ENCODE measurements at regions of chr10 and their contacts with region 1.

Region 1: GRCh38 chr10:73886085-73886529 is 11.8 kb upstream of the CAMK2G start:
- DNase-seq: peak; percentile 83
- H3K4me3 Mint-ChIP-seq: no peak overlapping the region
- H3K27ac Mint-ChIP-seq: peak overlapping the region; percentile 50
- H3K4me1 Mint-ChIP-seq: peaks cover 42% of the 10 kb centered on the region
- H3K27me3 Mint-ChIP-seq: no peaks in the 10 kb centered on the region
- CTCF ChIP-seq: peak; percentile 88

Region 2: DNA sequence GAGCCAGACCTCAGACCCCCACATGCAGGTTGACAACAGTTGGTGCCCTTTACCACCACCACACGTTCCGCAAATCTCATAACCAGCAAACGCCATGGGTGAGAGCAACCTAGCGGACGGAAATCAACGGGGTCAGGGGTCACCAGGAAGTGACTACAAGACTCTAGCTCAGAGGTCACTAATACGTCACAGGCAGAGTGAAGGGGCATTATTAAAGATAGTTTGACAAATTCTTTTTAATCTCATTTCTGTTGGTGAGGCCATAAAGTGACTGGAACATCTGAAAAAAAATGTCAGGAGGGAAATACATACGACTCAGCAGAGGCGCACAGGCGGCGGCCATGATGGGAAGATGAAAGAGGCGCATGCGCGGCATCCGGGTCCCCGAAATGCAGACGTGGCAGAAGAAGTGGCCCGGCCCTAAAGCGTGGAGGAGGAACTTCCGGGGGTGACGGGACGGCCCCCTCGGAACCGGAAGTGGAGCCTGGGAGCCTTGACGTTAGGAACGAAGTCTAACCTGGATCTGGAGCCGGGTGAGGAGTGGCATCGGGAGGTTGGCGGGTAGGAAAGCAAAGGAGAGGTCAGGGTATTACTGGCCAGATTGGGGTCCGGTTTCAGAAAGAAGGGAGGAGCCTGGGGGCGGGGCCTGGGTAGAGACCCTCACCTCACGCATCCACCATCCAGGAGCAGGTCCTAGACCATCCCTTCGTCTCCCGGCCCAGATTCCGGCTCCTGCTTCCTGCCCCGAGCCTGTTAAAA is 142.0 kb before region 1 on chr10 and contains the start of gene SEC24C:
- CTCF ChIA-PET with region 1: no interaction called
- POLR2A ChIA-PET with region 1: no interaction called
- intact Hi-C with region 1: no loop called
- DNase-seq: peak; percentile 97
- H3K4me3 Mint-ChIP-seq: peak within 1 kb of the TSS; percentile 98
- H3K27ac Mint-ChIP-seq: peak within 1 kb of the TSS; percentile 100
- H3K4me1 Mint-ChIP-seq: peaks cover 14% of the 10 kb centered on the region
- H3K27me3 Mint-ChIP-seq: no peaks in the 10 kb centered on the region
- CTCF ChIP-seq: no peak
- total RNA-seq, gene SEC24C: 78.0 and 97.9 TPM in 2 replicates

Region 3: DNA sequence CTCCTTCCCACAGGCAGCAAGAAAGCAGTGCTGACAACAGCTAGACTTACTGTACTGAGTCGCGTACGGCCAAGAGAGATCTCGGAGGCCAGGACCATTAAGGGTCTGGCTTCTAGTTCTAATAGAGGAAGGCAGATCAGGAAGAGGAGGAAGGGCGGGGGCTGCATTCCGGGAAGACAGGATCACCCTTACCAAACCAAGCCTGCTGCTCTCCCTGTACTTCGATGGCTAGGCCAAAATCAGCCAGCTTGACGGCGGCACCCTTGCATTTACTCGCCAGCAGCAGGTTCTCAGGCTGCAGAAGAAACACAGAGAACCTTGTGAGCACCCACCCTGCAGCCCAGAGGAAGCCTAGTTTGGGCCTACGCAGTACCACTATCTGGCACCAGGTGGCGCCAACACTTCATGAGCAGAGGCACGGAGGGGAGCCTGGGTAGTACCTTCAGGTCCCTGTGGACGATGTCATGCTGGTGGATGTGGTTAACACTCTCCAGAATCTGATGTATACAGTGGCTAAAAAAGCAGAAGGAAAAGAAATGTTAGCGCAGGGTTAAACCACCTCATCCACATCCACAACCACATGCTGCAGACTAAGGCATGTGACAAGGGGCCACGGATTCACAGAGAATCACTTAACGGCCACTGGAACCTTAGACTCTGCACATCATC is 37.2 kb before region 1 on chr10:
- CTCF ChIA-PET with region 1: interaction called, 98 read pairs
- POLR2A ChIA-PET with region 1: interaction called, 3 read pairs
- intact Hi-C with region 1: no loop called
- DNase-seq: peak; percentile 79
- H3K4me3 Mint-ChIP-seq: no peak overlapping the region
- H3K27ac Mint-ChIP-seq: no peak overlapping the region
- H3K4me1 Mint-ChIP-seq: no peaks in the 10 kb centered on the region
- H3K27me3 Mint-ChIP-seq: no peaks in the 10 kb centered on the region
- CTCF ChIP-seq: peak; percentile 98

Region 4: DNA sequence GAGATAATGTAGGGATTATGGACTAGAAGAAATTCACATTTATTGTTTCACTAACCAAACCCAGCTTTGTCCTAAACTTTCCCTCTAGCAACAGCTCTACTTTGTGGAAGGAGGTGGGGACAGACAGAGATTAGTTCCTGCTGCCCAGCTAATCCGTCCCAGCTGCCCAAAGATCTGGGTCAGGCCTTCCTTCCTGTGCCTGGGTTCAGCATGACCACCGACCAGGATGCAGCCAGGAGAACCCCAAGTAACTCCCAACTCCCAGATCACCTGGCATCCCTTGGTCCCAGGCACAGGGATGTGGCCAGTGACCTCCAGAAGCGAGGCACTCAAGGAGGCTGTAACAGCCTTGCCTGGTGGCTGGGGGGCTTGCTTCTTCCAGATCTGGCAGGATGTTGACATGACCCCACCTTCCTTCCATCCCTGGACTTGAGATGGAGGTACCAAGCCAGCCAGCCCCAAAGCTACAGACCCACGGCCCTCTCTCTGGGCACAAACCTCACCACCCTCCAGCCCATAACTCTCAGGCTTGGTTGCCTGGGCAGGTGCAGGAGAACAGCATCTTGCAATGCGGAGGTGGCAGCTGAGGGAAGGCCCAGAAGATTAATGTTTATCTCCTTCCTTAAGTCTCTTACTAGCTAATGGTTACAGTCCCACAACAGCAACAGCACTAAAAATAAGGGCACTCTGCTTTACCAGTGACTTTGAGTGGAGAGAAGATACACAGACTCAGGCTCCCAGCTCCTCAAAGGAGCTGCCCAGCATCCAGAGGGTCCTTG is 22.9 kb before region 1 on chr10:
- CTCF ChIA-PET with region 1: no interaction called
- POLR2A ChIA-PET with region 1: no interaction called
- intact Hi-C with region 1: no loop called
- DNase-seq: no peak
- H3K4me3 Mint-ChIP-seq: no peak overlapping the region
- H3K27ac Mint-ChIP-seq: no peak overlapping the region
- H3K4me1 Mint-ChIP-seq: no peaks in the 10 kb centered on the region
- H3K27me3 Mint-ChIP-seq: no peaks in the 10 kb centered on the region
- CTCF ChIP-seq: no peak

Region 5: DNA sequence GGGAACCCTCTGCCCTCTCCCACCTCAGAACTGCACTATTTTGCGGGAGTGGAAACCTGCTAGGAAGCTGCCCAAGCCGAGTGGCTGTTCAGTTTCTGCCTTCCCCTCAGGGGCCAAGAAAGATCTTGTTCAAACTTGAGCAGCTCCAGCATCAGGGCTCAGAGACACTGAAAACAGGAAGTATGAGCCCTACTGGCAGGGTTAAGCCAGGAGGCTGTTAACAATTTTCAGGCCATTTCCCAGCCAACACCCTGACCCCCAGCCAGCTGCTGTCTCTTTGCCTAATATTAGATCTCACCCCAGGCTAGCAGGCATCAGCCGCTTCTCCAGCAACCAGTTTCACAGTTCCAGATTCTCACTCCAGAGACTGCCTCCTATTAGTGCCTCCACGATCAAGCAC is 34.0 kb after region 1 on chr10:
- CTCF ChIA-PET with region 1: interaction called, 54 read pairs
- POLR2A ChIA-PET with region 1: interaction called, 113 read pairs
- intact Hi-C with region 1: no loop called
- DNase-seq: peak; percentile 91
- H3K4me3 Mint-ChIP-seq: no peak overlapping the region
- H3K27ac Mint-ChIP-seq: peak overlapping the region; percentile 95
- H3K4me1 Mint-ChIP-seq: peaks cover 29% of the 10 kb centered on the region
- H3K27me3 Mint-ChIP-seq: no peaks in the 10 kb centered on the region
- CTCF ChIP-seq: no peak

Region 6: DNA sequence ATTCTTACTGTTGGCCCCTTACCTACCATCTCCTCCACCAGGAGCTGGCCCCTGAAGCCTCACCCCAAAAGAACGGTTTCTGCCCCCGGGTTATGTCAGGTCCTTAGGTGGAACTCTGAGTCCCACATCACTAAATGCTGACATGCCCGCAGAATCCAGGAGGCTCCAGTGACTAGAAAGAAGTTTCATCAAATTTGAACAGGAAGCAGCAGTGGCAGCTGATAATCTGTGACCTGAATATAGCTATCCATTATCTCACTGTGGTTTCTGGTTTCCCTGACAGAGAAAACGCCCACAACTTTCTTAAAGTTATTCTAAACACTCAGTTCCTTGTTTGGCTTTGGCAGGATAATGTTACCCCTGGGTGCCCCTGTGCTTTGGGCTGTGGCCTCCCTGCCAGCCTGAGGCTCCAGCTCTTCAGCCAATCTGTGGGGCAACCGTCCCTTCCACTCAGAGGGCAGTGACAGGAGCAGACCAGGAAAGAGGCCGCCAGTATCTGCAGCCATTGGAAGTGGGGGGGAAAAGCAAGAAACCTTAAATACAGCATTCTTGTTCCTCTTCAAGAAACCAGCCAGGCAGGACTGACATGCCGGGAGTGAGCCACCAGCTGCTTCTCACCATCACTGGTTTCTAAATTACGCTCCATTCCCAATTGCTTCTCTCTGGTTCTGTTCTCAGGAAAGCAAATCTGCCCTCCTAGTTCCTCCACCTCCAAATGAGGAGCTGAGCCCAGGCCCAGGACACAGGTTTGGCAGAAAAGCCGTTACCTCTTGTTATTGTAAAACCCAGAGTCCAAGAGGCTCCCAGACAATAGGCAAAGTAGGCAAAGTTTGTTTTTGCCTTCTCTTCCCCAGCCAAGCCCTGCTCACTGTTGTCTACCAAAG is 70.6 kb after region 1 on chr10:
- CTCF ChIA-PET with region 1: interaction called, 19 read pairs
- POLR2A ChIA-PET with region 1: interaction called, 3 read pairs
- intact Hi-C with region 1: loop called (anchors 5 kb)
- DNase-seq: no peak
- H3K4me3 Mint-ChIP-seq: no peak overlapping the region
- H3K27ac Mint-ChIP-seq: no peak overlapping the region
- H3K4me1 Mint-ChIP-seq: peaks cover 4% of the 10 kb centered on the region
- H3K27me3 Mint-ChIP-seq: no peaks in the 10 kb centered on the region
- CTCF ChIP-seq: no peak

Region 7: GRCh38 chr10:74021248-74022055 is 135.3 kb after region 1 on chr10:
- CTCF ChIA-PET with region 1: interaction called, 7 read pairs
- POLR2A ChIA-PET with region 1: interaction called, 13 read pairs
- intact Hi-C with region 1: no loop called
- DNase-seq: peak; percentile 79
- H3K4me3 Mint-ChIP-seq: peak overlapping the region; percentile 53
- H3K27ac Mint-ChIP-seq: peak overlapping the region; percentile 43
- H3K4me1 Mint-ChIP-seq: peaks cover 28% of the 10 kb centered on the region
- H3K27me3 Mint-ChIP-seq: no peaks in the 10 kb centered on the region
- CTCF ChIP-seq: no peak

Region 8: DNA sequence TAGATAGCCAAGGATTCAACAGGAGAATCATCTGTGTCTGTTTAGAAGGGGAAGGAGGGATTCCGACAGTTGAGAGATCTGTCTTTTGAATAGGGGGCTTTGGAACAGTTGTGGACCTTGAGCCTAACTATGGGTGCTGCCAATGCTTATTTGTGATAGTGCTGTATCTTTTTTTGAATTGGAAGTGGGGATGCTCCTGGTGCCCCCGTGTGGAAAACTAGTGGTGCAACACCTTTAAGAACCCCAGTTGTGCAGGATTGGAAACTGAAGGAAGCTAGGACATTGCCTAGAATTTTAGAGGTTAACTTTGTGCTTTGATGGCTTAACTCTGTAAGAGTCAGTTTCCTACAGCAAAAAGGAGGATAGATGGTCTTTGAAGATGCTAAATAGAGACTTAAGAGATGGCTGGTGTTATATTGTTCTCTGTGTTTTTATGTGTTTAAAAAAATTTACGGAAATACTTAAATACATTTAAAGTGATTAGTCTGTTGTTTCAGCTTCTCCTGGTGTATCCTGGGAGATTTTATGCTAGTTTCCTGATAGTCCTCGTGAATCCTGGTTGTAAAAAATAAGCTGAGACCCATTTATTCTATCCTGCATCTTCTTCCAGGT is 195.2 kb after region 1 on chr10:
- CTCF ChIA-PET with region 1: interaction called, 60 read pairs
- POLR2A ChIA-PET with region 1: interaction called, 51 read pairs
- intact Hi-C with region 1: loop called (anchors 1 kb)
- DNase-seq: peak; percentile 76
- H3K4me3 Mint-ChIP-seq: no peak overlapping the region
- H3K27ac Mint-ChIP-seq: no peak overlapping the region
- H3K4me1 Mint-ChIP-seq: peaks cover 23% of the 10 kb centered on the region
- H3K27me3 Mint-ChIP-seq: no peaks in the 10 kb centered on the region
- CTCF ChIP-seq: peak; percentile 71

Measured in MCF 10A (cell line).